Naive thymus-derived CD4-positive, alpha-beta T cell (primary cell): ENCODE measurements at regions of chr5 and their contacts with region 1.

Region 1: GRCh38 chr5:78984439-78985115 is 533 bp downstream of the ARSB start:
- DNase-seq: peak; percentile 62 to 87 (median 67)
- ATAC-seq: peak; percentile 81
- H3K4me3 ChIP-seq: peak overlapping the region; percentile 79
- H3K4me3 Mint-ChIP-seq: peak overlapping the region; percentile 87 to 98 (median 92)
- H3K27ac ChIP-seq: peak overlapping the region; percentile 76
- H3K27ac Mint-ChIP-seq: peak overlapping the region; percentile 75 to 98 (median 91)
- H3K4me1 ChIP-seq: peaks cover 5 to 13% of the 10 kb centered on the region in 2 donors
- H3K4me1 Mint-ChIP-seq: peaks cover 15 to 30% (median 26%) of the 10 kb centered on the region in 7 donors
- H3K27me3 ChIP-seq: no peaks in the 10 kb centered on the region
- H3K27me3 Mint-ChIP-seq: no peaks in the 10 kb centered on the region

Region 2: DNA sequence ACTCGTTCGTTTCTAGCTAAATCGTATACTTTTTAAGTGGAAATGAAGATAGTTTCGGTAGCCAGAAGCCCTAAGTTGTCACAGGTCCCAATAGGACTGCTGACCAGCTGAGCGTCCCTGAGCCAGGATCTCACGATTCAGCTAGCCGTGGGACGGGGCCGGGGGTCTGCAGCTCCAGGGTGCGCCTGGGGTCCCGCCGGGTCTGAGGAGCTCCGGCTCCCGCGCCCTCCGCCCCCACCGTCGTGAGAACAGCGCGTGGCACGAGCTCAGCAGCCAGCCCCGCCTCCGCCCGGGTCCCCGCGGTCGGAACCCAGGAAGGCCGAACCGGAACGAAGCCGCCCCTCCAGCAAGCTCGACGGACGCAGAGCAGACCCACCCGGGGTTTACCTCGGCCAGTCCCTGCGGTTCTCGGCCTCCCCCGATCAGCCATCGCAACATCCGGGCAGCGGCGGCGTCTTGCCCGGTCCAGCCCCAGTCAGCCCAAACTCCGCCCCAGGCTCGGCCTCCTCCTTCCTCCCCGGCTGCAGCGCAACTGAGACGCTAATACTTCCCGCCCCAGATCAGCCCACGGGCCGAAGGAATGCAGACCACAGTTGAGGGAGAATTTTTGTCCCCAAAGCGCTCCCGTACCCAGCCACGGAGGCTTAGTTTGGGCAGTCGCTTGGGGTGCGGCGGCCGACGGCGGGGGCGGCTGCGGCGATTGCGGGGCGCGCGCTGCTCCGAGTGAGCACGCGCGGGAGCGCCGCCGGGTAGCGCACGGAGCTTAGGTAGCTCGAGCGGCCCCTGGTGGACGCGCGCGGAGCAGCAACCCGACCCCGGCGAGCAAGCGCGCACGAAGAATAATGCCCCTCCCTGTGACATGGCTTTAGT is 1492.6 kb before region 1 on chr5 and contains the start of gene WDR41:
- CTCF ChIA-PET with region 1: no interaction called
- POLR2A ChIA-PET with region 1: no interaction called
- intact Hi-C with region 1: loop called in 1 of 2 experiments (anchors 5 kb)
- DNase-seq: peak; percentile 74 to 90 (median 85)
- ATAC-seq: peak; percentile 97
- H3K4me3 ChIP-seq: peak within 1 kb of the TSS; percentile 87
- H3K4me3 Mint-ChIP-seq: peak within 1 kb of the TSS; percentile 84 to 97 (median 90)
- H3K27ac ChIP-seq: peak within 1 kb of the TSS; percentile 82
- H3K27ac Mint-ChIP-seq: peak within 1 kb of the TSS; percentile 67 to 95 (median 88)
- H3K4me1 ChIP-seq: peaks cover 0 to 4% of the 10 kb centered on the region in 2 donors
- H3K4me1 Mint-ChIP-seq: peaks cover 6 to 28% (median 10%) of the 10 kb centered on the region in 7 donors
- H3K27me3 ChIP-seq: no peaks in the 10 kb centered on the region
- H3K27me3 Mint-ChIP-seq: peaks cover 8 to 27% (median 21%) of the 10 kb centered on the region in 5 donors
- total RNA-seq, gene WDR41: 6.0 to 23.8 (median 13.7) TPM

Region 3: DNA sequence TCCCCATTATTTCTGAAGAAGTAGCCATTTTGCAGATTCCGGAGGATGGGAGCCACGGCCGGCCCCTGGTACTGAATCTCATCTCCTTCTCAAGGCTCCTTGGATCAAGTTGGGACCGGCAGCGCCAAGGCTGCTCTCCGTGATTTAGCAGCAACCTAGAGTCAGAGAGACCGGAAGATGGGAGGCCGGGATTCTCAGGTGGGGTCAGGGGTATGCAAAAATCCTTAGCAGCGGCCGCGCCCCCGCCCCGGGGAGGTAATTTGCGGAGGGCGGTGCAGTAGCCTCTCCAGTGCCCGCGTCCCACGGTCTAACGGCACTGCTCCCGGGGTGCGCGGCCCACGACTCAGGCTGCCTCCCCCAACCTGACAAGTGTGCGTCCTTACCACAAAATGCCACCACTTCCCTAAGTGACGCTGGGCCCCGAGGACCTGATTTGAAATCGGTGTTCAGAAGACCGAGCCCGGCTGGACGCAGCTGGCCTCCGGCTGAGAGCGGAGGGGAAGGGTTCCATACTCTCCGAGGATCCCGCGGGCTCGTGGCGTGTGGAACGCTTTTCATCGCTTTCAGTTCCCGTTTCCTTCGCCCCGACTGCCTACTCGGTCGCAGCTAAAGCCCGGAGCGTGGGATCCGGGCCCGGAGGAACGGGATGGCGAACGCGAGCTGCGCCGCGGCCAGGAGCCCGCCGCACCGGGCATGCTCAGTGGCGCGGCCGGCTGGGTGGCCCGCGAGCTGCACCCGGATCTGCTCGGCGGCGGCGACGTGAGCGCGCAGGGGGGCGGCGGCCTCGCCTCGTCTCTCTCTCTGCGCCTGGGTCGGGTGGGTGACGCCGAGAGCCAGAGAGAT is 624.5 kb before region 1 on chr5 and contains the start of gene SCAMP1:
- CTCF ChIA-PET with region 1: no interaction called
- POLR2A ChIA-PET with region 1: interaction called, 4 read pairs
- intact Hi-C with region 1: loop called (anchors 1 to 10 kb)
- DNase-seq: peak; percentile 84 to 96 (median 93)
- ATAC-seq: peak; percentile 92
- H3K4me3 ChIP-seq: peak within 1 kb of the TSS; percentile 99
- H3K4me3 Mint-ChIP-seq: peak within 1 kb of the TSS; percentile 89 to 97 (median 94)
- H3K27ac ChIP-seq: peak within 1 kb of the TSS; percentile 85
- H3K27ac Mint-ChIP-seq: peak within 1 kb of the TSS; percentile 71 to 97 (median 96)
- H3K4me1 ChIP-seq: peaks cover 11 to 16% of the 10 kb centered on the region in 2 donors
- H3K4me1 Mint-ChIP-seq: peaks cover 27 to 64% (median 55%) of the 10 kb centered on the region in 7 donors
- H3K27me3 ChIP-seq: no peaks in the 10 kb centered on the region
- H3K27me3 Mint-ChIP-seq: no peaks in the 10 kb centered on the region
- total RNA-seq, gene SCAMP1: 16.9 to 27.6 (median 23.0) TPM

Region 4: GRCh38 chr5:78447775-78448424 is 536.7 kb before region 1 on chr5:
- CTCF ChIA-PET with region 1: no interaction called
- POLR2A ChIA-PET with region 1: no interaction called
- intact Hi-C with region 1: no loop called
- DNase-seq: no peak
- ATAC-seq: no peak
- H3K4me3 ChIP-seq: no peak overlapping the region
- H3K4me3 Mint-ChIP-seq: no peak overlapping the region
- H3K27ac ChIP-seq: no peak overlapping the region
- H3K27ac Mint-ChIP-seq: no peak overlapping the region
- H3K4me1 ChIP-seq: no peaks in the 10 kb centered on the region
- H3K4me1 Mint-ChIP-seq: peaks cover 0 to 5% (median 0%) of the 10 kb centered on the region in 7 donors
- H3K27me3 ChIP-seq: no peaks in the 10 kb centered on the region
- H3K27me3 Mint-ChIP-seq: no peaks in the 10 kb centered on the region

Region 5: GRCh38 chr5:78893940-78894677 is 90.5 kb before region 1 on chr5:
- CTCF ChIA-PET with region 1: no interaction called
- POLR2A ChIA-PET with region 1: no interaction called
- intact Hi-C with region 1: no loop called
- DNase-seq: no peak
- ATAC-seq: no peak
- H3K4me3 ChIP-seq: no peak overlapping the region
- H3K4me3 Mint-ChIP-seq: no peak overlapping the region
- H3K27ac ChIP-seq: no peak overlapping the region
- H3K27ac Mint-ChIP-seq: peak overlapping the region in 1 of 9 donors; percentile 37
- H3K4me1 ChIP-seq: no peaks in the 10 kb centered on the region
- H3K4me1 Mint-ChIP-seq: peaks cover 0 to 7% (median 3%) of the 10 kb centered on the region in 7 donors
- H3K27me3 ChIP-seq: no peaks in the 10 kb centered on the region
- H3K27me3 Mint-ChIP-seq: no peaks in the 10 kb centered on the region

Region 6: DNA sequence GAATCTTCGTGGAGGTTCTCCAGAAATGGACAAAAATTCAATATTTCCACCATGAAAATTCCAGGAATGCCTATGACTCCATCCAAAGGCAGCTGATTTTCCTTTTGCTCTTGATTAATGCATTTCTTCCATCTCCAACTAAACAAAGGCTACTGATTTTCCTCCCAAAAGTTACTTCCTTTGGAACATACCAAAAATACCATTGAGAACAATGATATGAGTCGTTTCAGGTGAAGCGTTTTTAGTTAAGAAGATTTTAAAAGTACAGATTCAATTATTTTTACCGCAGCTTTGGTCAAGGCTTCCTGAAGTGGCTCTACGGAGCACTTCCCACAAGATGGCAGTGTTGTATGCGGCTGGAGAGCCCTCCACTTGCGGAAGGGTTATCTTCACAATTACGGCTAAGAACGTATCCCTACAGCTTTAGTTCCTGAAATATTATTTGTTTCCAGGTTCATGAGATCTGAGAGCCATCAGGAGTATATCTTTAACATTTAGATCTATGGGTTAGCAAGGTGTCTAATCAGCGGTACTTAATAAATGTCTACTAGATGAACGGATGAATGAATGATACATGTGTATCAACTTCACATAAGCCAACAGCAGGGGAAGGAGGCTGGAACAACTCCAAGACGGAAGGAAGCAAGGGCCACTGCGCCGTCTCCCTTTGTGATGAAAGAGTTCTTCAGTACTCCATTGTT is 36.4 kb after region 1 on chr5:
- CTCF ChIA-PET with region 1: interaction called, 6 read pairs
- POLR2A ChIA-PET with region 1: no interaction called
- intact Hi-C with region 1: loop called in 1 of 2 experiments (anchors 1 kb)
- DNase-seq: peak in 6 of 9 donors; percentile 4 to 25 (median 14)
- ATAC-seq: peak; percentile 79
- H3K4me3 ChIP-seq: no peak overlapping the region
- H3K4me3 Mint-ChIP-seq: peak overlapping the region in 2 of 10 donors; percentile 24 to 44
- H3K27ac ChIP-seq: no peak overlapping the region
- H3K27ac Mint-ChIP-seq: no peak overlapping the region
- H3K4me1 ChIP-seq: no peaks in the 10 kb centered on the region
- H3K4me1 Mint-ChIP-seq: peaks cover 7 to 14% (median 12%) of the 10 kb centered on the region in 7 donors
- H3K27me3 ChIP-seq: peaks cover 0 to 3% of the 10 kb centered on the region in 2 donors
- H3K27me3 Mint-ChIP-seq: peaks cover 56 to 79% (median 63%) of the 10 kb centered on the region in 5 donors

Region 7: DNA sequence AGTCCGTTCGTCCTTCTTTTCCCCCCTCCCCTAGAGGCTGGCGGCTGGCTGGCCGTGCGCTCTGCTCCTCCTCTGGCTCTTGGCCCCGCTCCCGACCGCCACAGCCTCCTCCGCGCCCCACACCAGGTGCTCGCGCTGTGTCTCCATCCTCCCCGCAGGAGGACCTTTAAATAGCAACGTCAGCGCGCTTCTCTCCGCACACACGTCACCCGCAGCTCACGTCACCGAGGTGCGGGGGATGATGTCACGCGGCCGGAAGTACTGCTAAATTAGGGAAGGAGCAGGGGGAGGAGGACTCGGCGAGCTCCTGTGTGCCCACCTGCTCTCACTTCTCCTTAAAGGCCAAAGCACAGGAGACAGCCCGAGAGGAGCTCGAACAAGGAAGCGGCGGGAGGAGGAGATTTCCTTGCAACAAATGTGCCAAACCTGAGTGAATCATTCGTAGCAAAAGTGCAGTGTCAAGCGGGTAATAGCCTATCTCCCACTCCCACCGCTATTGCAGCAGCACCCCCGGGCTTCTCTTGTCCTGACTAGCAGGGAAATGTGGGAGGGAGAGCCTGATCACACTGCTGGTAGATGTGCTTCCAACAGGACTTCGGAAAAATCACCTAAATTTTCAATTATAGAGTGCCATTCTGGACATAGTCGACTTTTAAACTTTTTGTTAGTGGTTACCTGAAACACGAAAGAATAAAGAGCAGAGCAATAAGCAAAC is 530.0 kb after region 1 on chr5:
- CTCF ChIA-PET with region 1: no interaction called
- POLR2A ChIA-PET with region 1: interaction called, 5 read pairs
- intact Hi-C with region 1: loop called (anchors 1 to 5 kb)
- DNase-seq: peak; percentile 80 to 94 (median 91)
- ATAC-seq: peak; percentile 91
- H3K4me3 ChIP-seq: peak overlapping the region; percentile 71
- H3K4me3 Mint-ChIP-seq: peak overlapping the region; percentile 88 to 99 (median 98)
- H3K27ac ChIP-seq: peak overlapping the region; percentile 97
- H3K27ac Mint-ChIP-seq: peak overlapping the region; percentile 93 to 99 (median 98)
- H3K4me1 ChIP-seq: peaks cover 4 to 26% of the 10 kb centered on the region in 2 donors
- H3K4me1 Mint-ChIP-seq: peaks cover 6 to 53% (median 40%) of the 10 kb centered on the region in 7 donors
- H3K27me3 ChIP-seq: peaks cover 0 to 7% of the 10 kb centered on the region in 2 donors
- H3K27me3 Mint-ChIP-seq: peaks cover 0 to 27% (median 23%) of the 10 kb centered on the region in 5 donors

Region 8: GRCh38 chr5:80654391-80655230 is 1670.0 kb after region 1 on chr5 and contains the starts of genes DHFR and MSH3:
- CTCF ChIA-PET with region 1: no interaction called
- POLR2A ChIA-PET with region 1: no interaction called
- intact Hi-C with region 1: loop called in 1 of 2 experiments (anchors 10 kb)
- DNase-seq: peak; percentile 73 to 91 (median 87)
- ATAC-seq: peak; percentile 86
- H3K4me3 ChIP-seq: peak within 1 kb of the TSS; percentile 91
- H3K4me3 Mint-ChIP-seq: peak within 1 kb of the TSS; percentile 82 to 98 (median 90)
- H3K27ac ChIP-seq: peak within 1 kb of the TSS; percentile 82
- H3K27ac Mint-ChIP-seq: peak within 1 kb of the TSS; percentile 89 to 97 (median 96)
- H3K4me1 ChIP-seq: peaks cover 24 to 28% of the 10 kb centered on the region in 2 donors
- H3K4me1 Mint-ChIP-seq: peaks cover 10 to 40% (median 32%) of the 10 kb centered on the region in 7 donors
- H3K27me3 ChIP-seq: no peaks in the 10 kb centered on the region
- H3K27me3 Mint-ChIP-seq: no peaks in the 10 kb centered on the region
- total RNA-seq, gene DHFR: 6.9 to 68.9 (median 17.0) TPM
- total RNA-seq, gene MSH3: 12.0 to 20.9 (median 16.7) TPM